Heart left ventricle (tissue), 16 donors: ENCODE measurements at regions of chr16 and their contacts with region 1.

Region 1: DNA sequence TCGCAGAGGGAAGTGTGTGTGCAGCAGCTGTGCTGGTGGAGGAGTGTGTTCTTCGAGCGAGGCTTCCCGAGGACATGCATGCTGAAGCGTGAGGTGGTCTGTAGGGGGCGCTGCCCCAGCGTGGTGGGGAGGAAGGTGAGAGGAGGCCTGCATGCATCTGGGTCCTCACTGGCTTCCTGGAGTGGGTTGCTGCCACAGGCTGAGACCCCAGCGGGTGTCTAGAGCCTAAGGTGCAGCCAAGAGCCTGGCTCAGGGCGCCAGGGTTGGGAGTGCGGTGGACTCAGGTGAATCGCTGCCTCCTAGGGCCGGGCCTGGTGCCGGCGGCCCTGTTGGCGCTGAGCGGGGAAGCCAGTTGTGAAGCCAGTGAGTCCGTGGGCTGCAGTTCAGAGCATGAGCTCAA is 7.5 kb upstream of the HSD3B7 start:
- DNase-seq: no peak
- ATAC-seq: no peak
- H3K4me3 ChIP-seq: no peak overlapping the region
- H3K27ac ChIP-seq: no peak overlapping the region
- H3K4me1 ChIP-seq: no peaks in the 10 kb centered on the region
- H3K27me3 ChIP-seq: no peaks in the 10 kb centered on the region
- CTCF ChIP-seq: peak in 5 of 12 donors; percentile 10 to 22 (median 16)
- POLR2A ChIP-seq: no peak

Region 2: DNA sequence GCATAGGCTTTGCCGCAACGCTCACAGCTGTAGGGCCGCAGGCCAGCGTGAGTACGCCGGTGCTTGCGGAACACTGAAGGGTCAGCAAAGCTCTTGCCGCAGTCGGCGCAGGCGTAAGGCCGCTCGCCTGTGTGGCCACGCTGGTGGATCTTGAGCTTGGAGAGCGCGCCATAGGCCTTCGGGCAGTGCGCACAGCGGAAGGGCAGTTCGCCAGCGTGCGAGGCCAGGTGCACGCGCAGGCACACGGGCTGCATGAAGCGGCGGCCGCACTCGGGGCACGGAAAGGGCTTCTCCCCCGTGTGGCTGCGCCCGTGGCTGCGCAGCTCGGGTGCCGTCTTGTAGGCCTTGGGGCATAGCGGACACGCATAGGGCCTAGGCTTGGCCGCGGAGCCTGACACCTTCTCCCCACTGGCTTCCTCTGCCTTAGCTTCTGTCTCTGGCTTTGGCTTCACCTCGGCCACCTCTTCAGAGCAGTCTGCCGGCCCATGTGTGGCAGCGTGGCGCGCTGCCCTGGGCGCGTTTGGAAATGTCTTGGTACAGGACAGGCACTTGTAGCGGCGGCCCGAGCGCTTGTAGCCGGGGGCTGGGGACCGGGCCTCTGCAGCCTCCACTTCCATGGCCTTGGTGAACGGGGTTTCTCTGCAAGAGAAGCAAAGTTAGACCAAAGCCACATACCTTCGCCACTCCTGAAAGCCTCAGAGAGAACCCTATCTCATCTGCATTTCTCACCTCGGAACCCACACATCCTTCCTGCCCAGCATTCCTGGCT is 86.5 kb after region 1 on chr16:
- intact Hi-C with region 1: no loop called
- DNase-seq: peak in 1 of 5 donors; percentile 35
- ATAC-seq: no peak
- H3K4me3 ChIP-seq: peak overlapping the region in 2 of 12 donors; percentile 10 to 20
- H3K27ac ChIP-seq: peak overlapping the region in 10 of 12 donors; percentile 6 to 87 (median 77)
- H3K4me1 ChIP-seq: peaks cover 0 to 38% (median 12%) of the 10 kb centered on the region in 12 donors
- H3K27me3 ChIP-seq: no peaks in the 10 kb centered on the region
- CTCF ChIP-seq: no peak
- POLR2A ChIP-seq: no peak

Region 3: GRCh38 chr16:31157136-31157535 is 179.6 kb after region 1 on chr16:
- intact Hi-C with region 1: loop called in 1 of 10 experiments (anchors 10 kb)
- DNase-seq: peak in 1 of 5 donors; percentile 70
- ATAC-seq: peak in 2 of 4 donors; percentile 28 to 68
- H3K4me3 ChIP-seq: no peak overlapping the region
- H3K27ac ChIP-seq: no peak overlapping the region
- H3K4me1 ChIP-seq: peaks cover 0 to 7% (median 0%) of the 10 kb centered on the region in 12 donors
- H3K27me3 ChIP-seq: peaks cover 0 to 4% (median 0%) of the 10 kb centered on the region in 9 donors
- CTCF ChIP-seq: no peak
- POLR2A ChIP-seq: no peak